ENCODE measurements at regions of chr18 and their contacts with region 1.

Region 1: DNA sequence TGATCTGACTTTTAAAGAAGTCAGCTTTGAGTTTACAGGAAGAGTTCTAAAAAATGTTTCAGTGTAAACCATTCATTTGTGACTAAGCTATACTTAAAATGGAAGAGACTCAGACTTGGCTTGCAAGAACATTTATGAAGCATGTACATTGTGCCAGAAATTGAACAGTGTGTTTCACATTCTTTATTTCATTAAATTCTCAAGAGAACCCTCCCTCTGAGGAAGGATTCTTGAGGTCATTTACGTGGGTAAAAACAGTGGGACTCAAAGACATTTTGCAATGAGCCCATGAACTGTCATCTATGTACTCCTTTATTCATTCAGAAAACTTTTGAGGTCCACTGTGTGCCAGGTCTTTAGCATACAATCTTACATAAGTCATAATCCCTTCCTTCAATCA is 143.6 kb upstream of the ZNF521 start:
- DNase-seq: no peak
- ATAC-seq: no peak
- H3K4me3 ChIP-seq: no peak overlapping the region
- H3K27ac ChIP-seq: no peak overlapping the region
- H3K4me1 ChIP-seq: no peaks in the 10 kb centered on the region
- H3K27me3 ChIP-seq: no peaks in the 10 kb centered on the region
- CTCF ChIP-seq: no peak

Region 2: GRCh38 chr18:24553571-24554285 is 941.9 kb before region 1 on chr18:
- CTCF ChIA-PET with region 1: no interaction called
- POLR2A ChIA-PET with region 1: no interaction called
- in situ Hi-C with region 1: no loop called
- intact Hi-C with region 1: loop called (anchors 10 kb)
- DNase-seq: no peak
- ATAC-seq: no peak
- H3K4me3 ChIP-seq: no peak overlapping the region
- H3K27ac ChIP-seq: no peak overlapping the region
- H3K4me1 ChIP-seq: no peaks in the 10 kb centered on the region
- H3K27me3 ChIP-seq: no peaks in the 10 kb centered on the region
- CTCF ChIP-seq: no peak